GM18951 (cell line): ENCODE measurements at regions of chr6 and their contacts with region 1.

Region 1: GRCh38 chr6:29938746-29939508 is 3.4 kb upstream of the HLA-A start:
- POLR2A ChIP-seq: no peak

Region 2: GRCh38 chr6:29442719-29443118 is 496.2 kb before region 1 on chr6:
- in situ Hi-C with region 1: no loop called
- POLR2A ChIP-seq: no peak

Region 3: GRCh38 chr6:29627755-29628418 is 311.0 kb before region 1 on chr6:
- in situ Hi-C with region 1: no loop called
- POLR2A ChIP-seq: no peak

Region 4: GRCh38 chr6:29884261-29884660 is 54.7 kb before region 1 on chr6:
- in situ Hi-C with region 1: loop called (anchors 5 kb)
- POLR2A ChIP-seq: no peak